ENCODE measurements at regions of chr16 and their contacts with region 1.

Region 1: DNA sequence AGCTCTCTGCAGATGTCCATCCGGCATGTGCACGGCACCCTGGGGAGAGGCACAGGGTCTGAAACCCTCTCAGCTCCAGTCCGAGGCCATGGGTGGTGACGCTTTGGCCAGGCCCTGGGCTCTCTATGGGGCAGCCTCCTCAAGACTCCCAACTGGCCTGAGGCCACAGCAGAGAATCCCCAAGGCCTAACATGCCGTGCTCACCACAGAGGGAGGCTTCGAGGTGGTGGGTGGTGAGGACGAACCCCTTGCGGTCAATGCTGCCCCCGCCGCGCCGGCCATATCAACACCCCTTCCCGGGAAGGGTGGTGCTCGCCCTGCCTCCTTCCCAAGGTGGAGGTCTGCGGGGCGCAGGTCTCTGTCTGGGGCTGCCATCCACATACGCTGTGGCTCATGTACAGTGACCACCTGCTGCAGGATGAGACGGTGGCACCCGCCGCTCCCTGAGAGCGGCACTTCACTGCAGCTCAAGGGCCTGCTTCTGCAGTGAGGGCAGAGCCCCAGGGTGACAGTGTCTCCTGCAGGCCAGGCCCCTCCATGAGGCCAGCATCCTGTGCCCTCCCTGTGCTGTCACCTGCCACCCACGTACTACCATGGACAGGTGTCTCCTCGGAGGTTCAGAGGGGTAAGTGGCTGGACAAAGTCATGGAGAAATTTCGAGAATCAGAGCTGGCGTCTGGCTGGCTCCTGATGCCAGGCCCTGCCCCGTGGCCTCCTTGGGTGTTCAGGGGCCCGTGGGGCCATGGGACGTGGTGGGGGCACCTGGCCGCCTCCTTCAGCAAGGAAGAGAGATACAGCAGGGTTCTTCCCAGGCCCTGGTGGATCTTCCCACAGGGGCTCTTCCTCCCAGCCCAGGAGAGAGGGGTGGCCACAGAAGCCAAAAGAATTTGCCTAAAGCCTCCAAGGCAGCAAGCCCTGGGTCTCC is 54.6 kb upstream of the ACSF3 start:
- DNase-seq: no peak
- H3K4me3 ChIP-seq: no peak overlapping the region
- H3K27ac ChIP-seq: no peak overlapping the region
- H3K4me1 ChIP-seq: no peaks in the 10 kb centered on the region
- H3K27me3 ChIP-seq: peaks cover 94% of the 10 kb centered on the region
- CTCF ChIP-seq: no peak

Region 2: DNA sequence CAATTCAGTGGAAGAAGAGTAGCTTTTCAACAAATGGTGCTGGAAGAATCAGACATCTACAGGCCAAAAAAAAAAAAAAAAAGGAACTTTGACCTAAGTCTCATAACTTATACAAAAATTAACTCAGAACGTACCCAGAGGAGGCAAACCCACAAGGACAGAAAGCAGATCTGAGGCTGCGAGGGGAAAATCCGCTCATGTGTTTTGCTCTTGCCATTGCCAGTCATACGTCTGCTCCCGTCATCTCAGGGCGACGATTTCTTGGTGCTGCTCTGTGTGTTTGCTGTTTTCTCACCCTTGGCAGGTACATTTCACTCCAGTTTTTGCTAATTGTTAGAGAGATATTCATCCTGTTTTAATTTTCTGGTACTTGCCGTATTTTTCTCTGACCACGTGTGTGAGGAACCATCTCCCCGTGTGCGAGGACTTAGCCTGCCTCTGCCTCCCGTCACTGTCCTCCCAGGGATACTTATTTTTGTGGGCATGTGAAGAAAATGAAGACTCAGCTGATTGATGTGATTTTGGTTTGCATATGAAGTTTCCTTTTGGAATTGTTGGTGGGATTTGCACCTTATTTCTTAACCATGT is 21.2 kb after region 1 on chr16:
- CTCF ChIA-PET with region 1: interaction called, 18 read pairs
- POLR2A ChIA-PET with region 1: no interaction called
- intact Hi-C with region 1: no loop called
- DNase-seq: no peak
- H3K4me3 ChIP-seq: no peak overlapping the region
- H3K27ac ChIP-seq: no peak overlapping the region
- H3K4me1 ChIP-seq: no peaks in the 10 kb centered on the region
- H3K27me3 ChIP-seq: peaks cover 59% of the 10 kb centered on the region
- CTCF ChIP-seq: no peak